ENCODE measurements at regions of chr19 and their contacts with region 1.

Region 1: DNA sequence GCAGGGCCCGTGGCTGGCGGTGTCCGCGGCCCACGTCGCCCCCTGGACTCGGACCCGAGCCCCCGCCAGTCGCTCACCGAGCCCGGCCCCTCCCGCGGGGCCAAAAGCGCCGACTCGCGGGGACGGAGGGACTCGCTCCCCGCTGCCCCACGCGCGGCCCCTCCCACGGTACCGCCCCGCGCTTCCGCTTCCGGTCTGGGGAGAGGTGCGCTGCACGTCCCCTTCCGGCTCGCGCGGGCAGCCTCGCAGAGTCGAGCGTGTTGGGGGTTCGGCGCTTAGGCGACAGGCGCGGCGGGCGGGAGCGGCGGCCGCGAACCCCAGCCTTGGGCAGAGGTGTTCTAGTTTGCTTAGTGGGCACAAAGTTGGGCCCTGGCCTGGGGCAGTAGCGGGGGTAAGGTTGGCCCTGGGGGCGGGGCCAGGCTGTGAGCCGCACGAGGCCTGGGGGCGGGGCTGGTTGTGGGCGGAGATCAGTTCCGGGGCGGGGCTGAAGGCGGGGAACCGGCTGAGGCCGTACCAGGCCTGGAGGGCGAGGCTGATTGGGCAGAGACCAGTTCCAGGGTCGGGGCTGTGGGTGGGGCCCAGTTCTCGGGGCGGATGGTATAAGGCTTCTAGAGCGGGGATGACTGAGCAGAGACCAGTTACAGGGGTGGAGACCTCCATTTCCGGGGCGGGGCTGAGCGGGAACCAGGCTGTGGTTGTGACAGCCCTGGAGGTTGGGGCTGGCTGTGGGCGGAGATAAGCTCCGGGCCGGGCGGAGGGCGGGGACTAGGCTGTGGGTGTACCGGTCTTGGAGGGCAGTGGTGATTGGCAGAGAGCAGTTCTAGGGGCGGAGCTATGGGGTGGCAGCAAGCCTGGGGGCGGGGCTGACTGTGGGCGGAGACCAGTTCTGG is at the starts of genes MBD3L1 and ZNF558:
- DNase-seq: peak; percentile 100
- ATAC-seq: peak; percentile 95
- H3K4me3 Mint-ChIP-seq: peak within 1 kb of the TSS; percentile 79
- H3K27ac Mint-ChIP-seq: peak within 1 kb of the TSS; percentile 90
- H3K4me1 Mint-ChIP-seq: peaks cover 19% of the 10 kb centered on the region
- H3K27me3 Mint-ChIP-seq: no peaks in the 10 kb centered on the region
- total RNA-seq, gene MBD3L1: not detected
- total RNA-seq, gene ZNF558: 31.8 to 33.5 TPM

Region 2: GRCh38 chr19:8412783-8413628 is 419.4 kb before region 1 on chr19 and contains the start of gene MARCHF2:
- CTCF ChIA-PET with region 1: no interaction called
- POLR2A ChIA-PET with region 1: no interaction called
- intact Hi-C with region 1: loop called in 1 of 2 experiments (anchors 1 kb)
- DNase-seq: peak; percentile 97
- ATAC-seq: peak; percentile 100
- H3K4me3 Mint-ChIP-seq: peak within 1 kb of the TSS; percentile 50
- H3K27ac Mint-ChIP-seq: no peak within 1 kb of the TSS
- H3K4me1 Mint-ChIP-seq: peaks cover 5% of the 10 kb centered on the region
- H3K27me3 Mint-ChIP-seq: no peaks in the 10 kb centered on the region
- total RNA-seq, gene MARCHF2: 9.1 to 10.1 TPM

Region 3: DNA sequence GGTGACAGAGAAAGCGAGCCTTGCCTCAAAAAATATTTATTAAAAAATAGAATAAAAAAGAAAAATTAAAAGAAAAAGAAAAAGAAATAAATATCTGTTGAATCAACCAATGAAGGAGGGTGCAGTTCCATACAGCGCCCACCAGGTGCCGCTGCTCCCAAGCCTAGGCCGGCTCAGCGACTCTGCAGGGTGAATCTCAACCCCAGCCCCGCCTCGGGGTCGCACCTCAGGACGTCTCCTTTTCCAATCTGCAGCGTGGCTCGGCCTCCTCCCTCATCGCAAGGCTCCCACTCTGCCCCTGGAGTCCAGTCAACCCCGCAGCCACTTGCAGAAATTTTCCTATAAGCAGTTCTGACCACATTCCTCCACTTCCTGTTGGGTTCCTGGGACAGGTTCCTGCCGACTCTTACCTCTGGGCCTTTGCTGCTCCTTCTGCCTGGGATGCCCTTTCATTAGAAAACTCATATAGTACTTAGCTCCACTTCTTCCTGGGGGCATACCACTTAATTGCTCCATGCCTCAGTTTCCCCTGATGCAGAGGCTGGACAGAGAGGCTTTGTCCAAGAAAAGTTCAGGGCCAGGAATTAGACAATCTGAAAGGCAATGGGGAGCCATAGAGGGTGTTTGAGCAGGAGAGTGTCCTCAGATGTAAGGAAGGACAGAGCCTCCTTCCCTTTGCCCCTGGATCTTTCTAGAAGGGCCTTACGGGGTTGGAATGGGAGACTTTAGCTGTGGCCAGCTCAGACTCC is 177.6 kb before region 1 on chr19:
- CTCF ChIA-PET with region 1: no interaction called
- POLR2A ChIA-PET with region 1: no interaction called
- intact Hi-C with region 1: loop called in 1 of 2 experiments (anchors 5 kb)
- DNase-seq: peak; percentile 81
- ATAC-seq: peak; percentile 75
- H3K4me3 Mint-ChIP-seq: peak overlapping the region; percentile 27
- H3K27ac Mint-ChIP-seq: no peak overlapping the region
- H3K4me1 Mint-ChIP-seq: peaks cover 9% of the 10 kb centered on the region
- H3K27me3 Mint-ChIP-seq: no peaks in the 10 kb centered on the region

Region 4: GRCh38 chr19:8846819-8847218 is 14.4 kb after region 1 on chr19:
- CTCF ChIA-PET with region 1: no interaction called
- POLR2A ChIA-PET with region 1: no interaction called
- intact Hi-C with region 1: no loop called
- DNase-seq: no peak
- ATAC-seq: no peak
- H3K4me3 Mint-ChIP-seq: no peak overlapping the region
- H3K27ac Mint-ChIP-seq: no peak overlapping the region
- H3K4me1 Mint-ChIP-seq: no peaks in the 10 kb centered on the region
- H3K27me3 Mint-ChIP-seq: peaks cover 15% of the 10 kb centered on the region

Region 5: GRCh38 chr19:9323919-9324583 is 491.7 kb after region 1 on chr19 and contains the start of gene ZNF559:
- CTCF ChIA-PET with region 1: no interaction called
- POLR2A ChIA-PET with region 1: no interaction called
- intact Hi-C with region 1: loop called in 1 of 2 experiments (anchors 1 kb)
- DNase-seq: peak; percentile 97
- ATAC-seq: peak; percentile 99
- H3K4me3 Mint-ChIP-seq: peak within 1 kb of the TSS; percentile 84
- H3K27ac Mint-ChIP-seq: peak within 1 kb of the TSS; percentile 96
- H3K4me1 Mint-ChIP-seq: peaks cover 23% of the 10 kb centered on the region
- H3K27me3 Mint-ChIP-seq: no peaks in the 10 kb centered on the region
- total RNA-seq, gene ZNF559: 11.7 to 13.0 TPM

Region 6: GRCh38 chr19:9621156-9622037 is 789.0 kb after region 1 on chr19 and contains the start of gene ZNF561:
- CTCF ChIA-PET with region 1: no interaction called
- POLR2A ChIA-PET with region 1: no interaction called
- intact Hi-C with region 1: loop called in 1 of 2 experiments (anchors 1 kb)
- DNase-seq: peak; percentile 93
- ATAC-seq: peak; percentile 89
- H3K4me3 Mint-ChIP-seq: peak within 1 kb of the TSS; percentile 89
- H3K27ac Mint-ChIP-seq: peak within 1 kb of the TSS; percentile 96
- H3K4me1 Mint-ChIP-seq: peaks cover 23% of the 10 kb centered on the region
- H3K27me3 Mint-ChIP-seq: no peaks in the 10 kb centered on the region
- total RNA-seq, gene ZNF561: 19.1 to 22.7 TPM

Region 7: GRCh38 chr19:9785367-9786331 is 953.3 kb after region 1 on chr19:
- CTCF ChIA-PET with region 1: no interaction called
- POLR2A ChIA-PET with region 1: no interaction called
- intact Hi-C with region 1: loop called in 1 of 2 experiments (anchors 1 kb)
- DNase-seq: peak; percentile 100
- ATAC-seq: peak; percentile 89
- H3K4me3 Mint-ChIP-seq: peak overlapping the region; percentile 84
- H3K27ac Mint-ChIP-seq: peak overlapping the region; percentile 98
- H3K4me1 Mint-ChIP-seq: peaks cover 26% of the 10 kb centered on the region
- H3K27me3 Mint-ChIP-seq: no peaks in the 10 kb centered on the region

Measured in activated CD4-positive, alpha-beta T cell treated with anti-CD3 and anti-CD28 coated beads for 36 hours (primary cell).